T-cell (primary cell): ENCODE measurements at regions of chr9 and their contacts with region 1.

Region 1: GRCh38 chr9:70413798-70414775 is at the start of gene KLF9:
- DNase-seq: peak; percentile 77 to 96 (median 92)
- ATAC-seq: peak; percentile 83 to 87 (median 84)
- H3K4me3 ChIP-seq: peak within 1 kb of the TSS; percentile 92 to 94
- H3K4me3 Mint-ChIP-seq: peak within 1 kb of the TSS; percentile 95 to 99 (median 95)
- H3K27ac ChIP-seq: peak within 1 kb of the TSS; percentile 99
- H3K27ac Mint-ChIP-seq: peak within 1 kb of the TSS; percentile 100
- H3K4me1 ChIP-seq: peaks cover 11 to 46% of the 10 kb centered on the region in 2 experiments
- H3K4me1 Mint-ChIP-seq: peaks cover 48 to 54% (median 50%) of the 10 kb centered on the region in 3 donors
- H3K27me3 ChIP-seq: no peaks in the 10 kb centered on the region
- H3K27me3 Mint-ChIP-seq: peaks cover 0 to 2% of the 10 kb centered on the region in 2 donors
- total RNA-seq, gene KLF9: 21.7 to 91.7 (median 23.6) TPM

Region 2: DNA sequence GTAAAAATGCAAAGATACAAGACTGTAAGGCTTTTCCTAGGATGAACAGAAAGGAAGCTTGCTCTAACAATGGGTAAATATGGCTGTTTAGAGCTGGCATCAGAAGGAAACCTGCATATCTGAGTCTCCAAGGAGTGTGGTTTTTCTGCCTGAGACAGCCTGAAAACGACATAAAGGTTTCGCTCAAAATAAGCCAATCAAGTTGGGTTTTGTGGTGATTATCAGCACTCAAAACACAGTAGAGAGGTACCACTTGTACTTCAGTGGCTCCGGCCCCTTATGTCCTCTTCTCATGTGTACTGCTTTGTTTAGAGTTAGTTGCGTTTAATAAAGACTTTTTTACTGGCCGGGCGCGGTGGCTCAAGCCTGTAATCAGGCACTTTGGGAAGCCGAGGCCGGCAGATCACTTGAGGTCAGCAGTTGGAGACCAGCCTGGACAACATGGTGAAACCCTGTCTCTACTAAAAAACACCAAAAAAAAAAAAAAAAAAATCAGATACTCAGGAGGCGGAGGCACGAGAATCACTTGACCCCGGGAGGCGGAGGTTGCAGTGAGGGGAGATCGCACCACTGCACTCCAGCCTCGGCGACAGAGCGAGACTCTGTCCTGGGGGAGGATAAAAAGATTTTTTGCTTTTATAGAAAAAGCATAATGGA is 39.0 kb before region 1 on chr9:
- CTCF ChIA-PET with region 1: interaction called in 1 of 2 experiments, 3 read pairs
- POLR2A ChIA-PET with region 1: interaction called in 1 of 2 experiments, 11 read pairs
- DNase-seq: no peak
- ATAC-seq: no peak
- H3K4me3 ChIP-seq: no peak overlapping the region
- H3K4me3 Mint-ChIP-seq: no peak overlapping the region
- H3K27ac ChIP-seq: no peak overlapping the region
- H3K27ac Mint-ChIP-seq: no peak overlapping the region
- H3K4me1 ChIP-seq: no peaks in the 10 kb centered on the region
- H3K4me1 Mint-ChIP-seq: no peaks in the 10 kb centered on the region
- H3K27me3 ChIP-seq: no peaks in the 10 kb centered on the region
- H3K27me3 Mint-ChIP-seq: no peaks in the 10 kb centered on the region

Region 3: GRCh38 chr9:70399141-70399540 is 14.9 kb before region 1 on chr9:
- CTCF ChIA-PET with region 1: interaction called in 1 of 2 experiments, 5 read pairs
- POLR2A ChIA-PET with region 1: interaction called, 6 to 10 read pairs
- DNase-seq: no peak
- ATAC-seq: no peak
- H3K4me3 ChIP-seq: no peak overlapping the region
- H3K4me3 Mint-ChIP-seq: peak overlapping the region; percentile 4 to 55 (median 39)
- H3K27ac ChIP-seq: peak overlapping the region; percentile 80
- H3K27ac Mint-ChIP-seq: peak overlapping the region; percentile 92 to 93
- H3K4me1 ChIP-seq: peaks cover 9 to 64% of the 10 kb centered on the region in 2 experiments
- H3K4me1 Mint-ChIP-seq: peaks cover 78 to 84% (median 78%) of the 10 kb centered on the region in 3 donors
- H3K27me3 ChIP-seq: no peaks in the 10 kb centered on the region
- H3K27me3 Mint-ChIP-seq: no peaks in the 10 kb centered on the region

Region 4: GRCh38 chr9:70439991-70440706 is 26.1 kb after region 1 on chr9:
- CTCF ChIA-PET with region 1: no interaction called
- POLR2A ChIA-PET with region 1: no interaction called
- DNase-seq: no peak
- ATAC-seq: no peak
- H3K4me3 ChIP-seq: no peak overlapping the region
- H3K4me3 Mint-ChIP-seq: no peak overlapping the region
- H3K27ac ChIP-seq: no peak overlapping the region
- H3K27ac Mint-ChIP-seq: no peak overlapping the region
- H3K4me1 ChIP-seq: no peaks in the 10 kb centered on the region
- H3K4me1 Mint-ChIP-seq: peaks cover 8 to 10% (median 9%) of the 10 kb centered on the region in 3 donors
- H3K27me3 ChIP-seq: no peaks in the 10 kb centered on the region
- H3K27me3 Mint-ChIP-seq: peaks cover 3 to 4% of the 10 kb centered on the region in 2 donors

Region 5: DNA sequence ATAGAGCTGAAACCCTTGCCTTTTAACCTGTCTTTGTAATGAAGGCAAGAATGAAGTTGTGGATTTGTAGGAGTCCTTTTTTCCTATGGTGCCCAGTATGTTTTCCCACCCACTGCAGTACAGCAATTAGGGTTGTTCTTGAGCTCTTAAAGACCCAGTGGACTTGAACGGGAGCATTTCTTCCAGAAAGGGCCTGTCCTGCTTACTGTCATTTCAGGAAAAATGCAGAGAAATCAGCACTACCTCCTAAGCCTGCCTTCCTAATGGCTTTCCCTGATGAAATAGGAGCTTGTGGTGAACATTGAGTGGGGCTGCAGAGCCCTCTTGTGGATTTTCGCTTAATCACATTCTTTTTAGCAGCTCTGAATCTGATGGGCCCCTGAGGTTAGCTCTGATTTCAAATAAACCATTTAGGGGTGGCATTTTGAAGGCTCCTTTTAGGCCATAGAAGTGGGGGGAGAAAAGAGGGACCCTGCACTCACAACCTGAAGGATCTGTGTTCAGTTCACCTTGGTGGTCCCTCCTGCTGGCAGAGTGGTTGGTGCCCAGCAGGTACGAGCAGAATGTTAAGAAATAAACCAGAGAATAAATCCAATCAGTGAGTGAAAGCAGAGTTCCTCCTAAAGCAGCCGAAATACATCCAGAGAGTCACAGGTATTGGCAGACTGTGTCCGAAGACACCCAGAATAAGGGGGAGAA is 188.4 kb after region 1 on chr9:
- CTCF ChIA-PET with region 1: interaction called, 4 to 10 read pairs
- POLR2A ChIA-PET with region 1: no interaction called
- DNase-seq: peak in 30 of 35 experiments; percentile 4 to 74 (median 25)
- ATAC-seq: peak in 3 of 4 experiments; percentile 60 to 80 (median 78)
- H3K4me3 ChIP-seq: no peak overlapping the region
- H3K4me3 Mint-ChIP-seq: no peak overlapping the region
- H3K27ac ChIP-seq: no peak overlapping the region
- H3K27ac Mint-ChIP-seq: no peak overlapping the region
- H3K4me1 ChIP-seq: peaks cover 0 to 3% of the 10 kb centered on the region in 2 experiments
- H3K4me1 Mint-ChIP-seq: peaks cover 0 to 2% (median 0%) of the 10 kb centered on the region in 3 donors
- H3K27me3 ChIP-seq: no peaks in the 10 kb centered on the region
- H3K27me3 Mint-ChIP-seq: no peaks in the 10 kb centered on the region

Region 6: DNA sequence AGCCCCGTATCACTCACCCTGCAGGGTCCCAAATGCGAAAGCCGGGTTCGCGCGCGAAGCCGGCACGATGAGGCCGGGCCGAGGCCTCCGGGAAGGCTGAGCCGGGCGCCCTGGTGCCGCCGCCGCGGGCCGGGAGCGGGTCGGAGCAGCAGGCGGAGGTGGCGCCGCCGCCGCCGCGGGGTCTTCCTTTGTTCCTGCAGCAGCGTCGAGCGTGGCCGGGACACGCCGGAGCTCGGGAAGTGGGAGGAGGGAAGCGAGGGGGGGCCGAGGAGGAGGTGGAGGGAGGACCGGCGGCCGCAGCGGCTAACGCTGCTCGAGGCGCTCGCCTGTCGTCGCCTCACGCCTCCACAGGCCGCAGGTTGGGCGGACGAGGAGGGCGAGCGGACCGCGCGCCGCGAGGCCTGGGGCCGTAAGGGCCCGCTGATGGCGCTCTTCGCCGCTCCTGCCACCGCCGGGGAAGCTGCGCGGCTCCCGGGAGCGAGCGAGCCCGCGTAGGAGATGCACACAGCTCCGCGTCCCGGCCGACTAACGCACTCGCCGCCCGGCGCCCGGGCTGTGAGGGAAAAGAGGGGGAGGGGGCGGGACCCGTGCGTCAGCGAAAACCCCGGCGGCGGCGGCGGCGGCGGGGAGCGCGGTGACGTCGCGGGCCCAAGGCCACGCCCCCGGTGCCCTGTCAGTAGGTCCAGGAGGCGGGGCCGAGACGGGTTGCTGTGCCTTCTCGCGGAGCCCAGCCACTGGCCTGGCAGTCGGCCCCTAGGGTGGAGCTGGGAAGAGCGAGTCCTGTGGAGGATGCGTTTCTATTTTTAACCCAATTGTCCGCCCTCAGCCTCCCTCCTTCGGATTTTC is 1950.8 kb after region 1 on chr9 and contains the start of gene ZFAND5:
- CTCF ChIA-PET with region 1: interaction called in 1 of 2 experiments, 4 read pairs
- POLR2A ChIA-PET with region 1: interaction called in 1 of 2 experiments, 10 read pairs
- DNase-seq: peak; percentile 82 to 98 (median 91)
- ATAC-seq: peak; percentile 76 to 85 (median 82)
- H3K4me3 ChIP-seq: peak within 1 kb of the TSS; percentile 96 to 98
- H3K4me3 Mint-ChIP-seq: peak within 1 kb of the TSS; percentile 92 to 95 (median 93)
- H3K27ac ChIP-seq: peak within 1 kb of the TSS; percentile 100
- H3K27ac Mint-ChIP-seq: peak within 1 kb of the TSS; percentile 97 to 99
- H3K4me1 ChIP-seq: peaks cover 16 to 27% of the 10 kb centered on the region in 2 experiments
- H3K4me1 Mint-ChIP-seq: peaks cover 40 to 47% (median 40%) of the 10 kb centered on the region in 3 donors
- H3K27me3 ChIP-seq: no peaks in the 10 kb centered on the region
- H3K27me3 Mint-ChIP-seq: no peaks in the 10 kb centered on the region
- total RNA-seq, gene ZFAND5: 112 to 275 (median 118) TPM